Colonic mucosa (tissue), 4 donors: ENCODE measurements at regions of chr1 and their contacts with region 1.

Region 1: DNA sequence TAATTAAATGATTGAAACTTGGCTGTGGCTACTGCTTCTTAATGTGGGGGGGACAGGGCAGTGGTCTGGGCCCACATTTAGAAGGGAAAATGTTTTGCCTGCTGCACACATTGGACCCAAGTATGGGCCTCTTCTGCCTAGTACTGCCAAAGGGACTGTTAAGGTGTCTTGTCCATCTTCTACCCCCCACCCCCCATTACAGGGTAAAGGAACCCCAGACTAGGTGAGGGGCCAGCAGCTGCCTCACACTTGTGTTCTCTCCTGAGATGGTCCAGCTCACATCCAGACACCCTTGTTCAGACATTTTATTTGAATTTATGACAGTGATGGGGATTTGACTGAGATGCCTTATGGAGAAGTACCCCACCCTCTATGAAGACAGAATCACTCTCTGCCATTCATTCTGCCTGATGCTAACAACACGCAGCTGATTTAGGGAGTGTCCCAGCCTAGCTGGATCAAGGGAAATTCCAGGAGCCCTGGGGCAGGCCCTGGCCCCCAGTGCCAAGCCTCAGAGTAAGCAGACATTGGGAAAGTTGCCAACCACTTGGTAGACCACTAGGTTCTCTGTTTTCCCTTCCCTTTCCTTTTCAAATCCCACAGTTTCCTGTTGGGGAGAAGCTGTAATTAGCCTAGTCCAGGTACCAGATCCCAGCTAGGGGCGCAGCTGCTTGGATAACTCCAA is 42.1 kb downstream of the YARS1 start:
- DNase-seq: no peak
- H3K4me3 ChIP-seq: no peak overlapping the region
- H3K27ac ChIP-seq: no peak overlapping the region
- H3K4me1 ChIP-seq: no peaks in the 10 kb centered on the region
- H3K27me3 ChIP-seq: no peaks in the 10 kb centered on the region
- CTCF ChIP-seq: no peak

Region 2: GRCh38 chr1:32713081-32713480 is 62.0 kb before region 1 on chr1:
- intact Hi-C with region 1: loop called (anchors 2 kb)
- DNase-seq: no peak
- H3K4me3 ChIP-seq: no peak overlapping the region
- H3K27ac ChIP-seq: no peak overlapping the region
- H3K4me1 ChIP-seq: no peaks in the 10 kb centered on the region
- H3K27me3 ChIP-seq: no peaks in the 10 kb centered on the region
- CTCF ChIP-seq: no peak

Region 3: GRCh38 chr1:32876341-32877210 is 101.5 kb after region 1 on chr1:
- intact Hi-C with region 1: no loop called
- DNase-seq: peak; percentile 68
- H3K4me3 ChIP-seq: no peak overlapping the region
- H3K27ac ChIP-seq: no peak overlapping the region
- H3K4me1 ChIP-seq: no peaks in the 10 kb centered on the region
- H3K27me3 ChIP-seq: peaks cover 9% of the 10 kb centered on the region
- CTCF ChIP-seq: peak; percentile 91

Region 4: GRCh38 chr1:33014464-33015163 is 239.5 kb after region 1 on chr1:
- intact Hi-C with region 1: no loop called
- DNase-seq: no peak
- H3K4me3 ChIP-seq: no peak overlapping the region
- H3K27ac ChIP-seq: no peak overlapping the region
- H3K4me1 ChIP-seq: no peaks in the 10 kb centered on the region
- H3K27me3 ChIP-seq: no peaks in the 10 kb centered on the region
- CTCF ChIP-seq: no peak